ENCODE measurements at regions of chr1 and their contacts with region 1.

Region 1: GRCh38 chr1:43864111-43865045 is 69.2 kb upstream of the ARTN start:
- DNase-seq: no peak
- H3K4me3 Mint-ChIP-seq: no peak overlapping the region
- H3K27ac Mint-ChIP-seq: no peak overlapping the region
- H3K4me1 Mint-ChIP-seq: peaks cover 36% of the 10 kb centered on the region
- H3K27me3 Mint-ChIP-seq: no peaks in the 10 kb centered on the region

Region 2: GRCh38 chr1:43836267-43836951 is 28.0 kb before region 1 on chr1:
- CTCF ChIA-PET with region 1: no interaction called
- intact Hi-C with region 1: loop called (anchors 2 kb)
- DNase-seq: peak; percentile 75
- H3K4me3 Mint-ChIP-seq: no peak overlapping the region
- H3K27ac Mint-ChIP-seq: peak overlapping the region; percentile 12
- H3K4me1 Mint-ChIP-seq: peaks cover 52% of the 10 kb centered on the region
- H3K27me3 Mint-ChIP-seq: no peaks in the 10 kb centered on the region

Region 3: DNA sequence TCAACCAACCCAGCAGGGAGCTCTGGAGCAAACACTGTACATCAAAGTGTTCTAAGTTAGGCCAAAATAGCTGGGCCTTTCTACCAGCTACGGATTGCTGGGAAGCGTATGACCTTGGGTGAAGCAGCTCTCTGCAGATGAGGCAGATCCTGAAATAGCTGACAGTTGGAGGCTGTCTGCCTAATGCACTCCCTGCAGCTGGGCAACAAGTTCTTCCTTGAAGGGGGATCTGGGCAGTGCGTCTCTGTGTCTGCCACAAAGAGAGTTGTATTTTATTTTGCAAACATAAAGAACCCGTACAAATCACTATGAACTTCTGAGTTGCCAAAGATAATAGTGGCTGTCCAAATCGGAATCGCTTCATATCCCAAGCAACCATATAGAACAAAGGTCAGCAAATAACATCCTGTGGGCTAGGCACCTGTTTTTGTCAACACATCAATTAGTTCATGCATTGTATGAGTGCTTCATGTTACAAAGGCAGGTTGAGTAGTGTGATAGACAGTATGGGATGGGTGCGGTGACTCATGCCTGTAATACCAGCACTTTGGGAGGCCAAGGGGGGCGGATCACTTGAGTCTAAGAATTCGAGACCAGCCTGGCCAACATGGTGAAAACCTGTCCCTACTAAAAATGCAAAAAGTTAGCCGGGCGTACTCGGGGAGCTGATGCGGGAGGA is 225.1 kb after region 1 on chr1:
- CTCF ChIA-PET with region 1: no interaction called
- intact Hi-C with region 1: no loop called
- DNase-seq: no peak
- H3K4me3 Mint-ChIP-seq: no peak overlapping the region
- H3K27ac Mint-ChIP-seq: no peak overlapping the region
- H3K4me1 Mint-ChIP-seq: no peaks in the 10 kb centered on the region
- H3K27me3 Mint-ChIP-seq: peaks cover 12% of the 10 kb centered on the region